ENCODE measurements at regions of chr3 and their contacts with region 1.

Region 1: GRCh38 chr3:145776782-145777408 is 384.1 kb downstream of the PLOD2 start:
- DNase-seq: no peak
- H3K4me3 ChIP-seq: no peak overlapping the region
- CTCF ChIP-seq: peak; percentile 58

Region 2: GRCh38 chr3:146026547-146026946 is 249.7 kb after region 1 on chr3:
- CTCF ChIA-PET with region 1: interaction called, 51 read pairs
- POLR2A ChIA-PET with region 1: no interaction called
- DNase-seq: no peak
- H3K4me3 ChIP-seq: no peak overlapping the region
- CTCF ChIP-seq: no peak

Measured in AG04449 (cell line).